Right lobe of liver (tissue), 6 donors: ENCODE measurements at regions of chr6 and their contacts with region 1.

Region 1: DNA sequence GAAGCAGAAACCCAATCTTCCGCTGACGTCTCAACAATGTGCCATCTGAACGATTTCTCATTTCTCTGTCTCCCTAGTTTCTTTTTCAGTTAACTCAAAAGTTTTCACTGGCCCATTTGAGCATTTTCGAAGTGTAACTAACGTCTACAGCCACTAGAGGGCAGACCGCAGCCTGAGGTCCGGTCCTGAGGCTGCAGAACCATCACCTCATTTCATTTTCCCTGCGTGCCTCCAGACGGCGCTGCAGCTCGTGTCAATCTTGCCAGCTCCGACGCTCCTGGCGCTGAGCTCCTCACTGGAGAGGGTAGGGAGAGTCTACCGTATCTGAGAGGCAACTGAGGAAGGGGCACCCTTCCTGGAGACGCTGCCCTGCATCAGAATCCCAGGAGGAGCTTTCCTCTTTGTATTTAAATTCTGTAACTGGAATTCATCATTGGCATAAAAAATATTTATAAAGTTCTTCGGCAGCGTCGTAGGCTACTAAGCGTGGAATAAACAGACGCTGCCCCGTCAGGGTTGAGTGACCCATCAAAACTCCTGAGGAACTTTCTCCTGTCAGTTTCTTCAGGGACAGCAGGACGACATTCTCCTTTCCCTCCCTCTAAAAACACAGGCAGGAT is 28.5 kb upstream of the DTNBP1 start:
- DNase-seq: peak; percentile 83 to 86 (median 83)
- ATAC-seq: peak; percentile 98 to 100 (median 99)
- H3K4me3 ChIP-seq: peak overlapping the region in 1 of 3 donors; percentile 12
- H3K27ac ChIP-seq: peak overlapping the region in 1 of 3 donors; percentile 53
- H3K4me1 ChIP-seq: peaks cover 0 to 15% (median 8%) of the 10 kb centered on the region in 4 donors
- H3K27me3 ChIP-seq: no peaks in the 10 kb centered on the region
- CTCF ChIP-seq: peak; percentile 99 to 100 (median 100)
- POLR2A ChIP-seq: no peak

Region 2: DNA sequence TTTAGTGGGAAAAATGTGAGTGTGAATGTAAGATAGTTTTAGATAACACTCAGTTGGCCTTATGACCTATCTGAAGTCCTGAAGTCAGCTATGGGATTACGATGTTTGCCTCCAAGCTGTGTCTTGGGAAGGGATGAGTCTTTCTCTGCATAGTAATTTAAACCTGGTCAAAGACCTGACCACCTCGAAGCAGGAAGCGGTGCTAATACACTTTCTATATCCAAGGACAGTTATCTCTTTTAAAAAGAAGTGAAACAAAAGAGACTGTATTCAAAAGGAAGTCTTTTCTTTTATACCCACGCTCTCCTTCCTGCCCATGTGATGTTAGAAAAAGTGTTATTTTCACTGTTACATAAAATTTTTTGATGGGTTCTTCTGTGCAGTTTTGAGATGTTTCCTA is 350.6 kb before region 1 on chr6:
- intact Hi-C with region 1: no loop called
- DNase-seq: no peak
- ATAC-seq: peak in 1 of 4 donors; percentile 46
- H3K4me3 ChIP-seq: no peak overlapping the region
- H3K27ac ChIP-seq: no peak overlapping the region
- H3K4me1 ChIP-seq: peaks cover 0 to 12% (median 0%) of the 10 kb centered on the region in 4 donors
- H3K27me3 ChIP-seq: no peaks in the 10 kb centered on the region
- CTCF ChIP-seq: no peak
- POLR2A ChIP-seq: no peak

Region 3: GRCh38 chr6:16058216-16059075 is 367.1 kb after region 1 on chr6:
- intact Hi-C with region 1: no loop called
- DNase-seq: no peak
- ATAC-seq: no peak
- H3K4me3 ChIP-seq: no peak overlapping the region
- H3K27ac ChIP-seq: no peak overlapping the region
- H3K4me1 ChIP-seq: no peaks in the 10 kb centered on the region
- H3K27me3 ChIP-seq: no peaks in the 10 kb centered on the region
- CTCF ChIP-seq: no peak
- POLR2A ChIP-seq: no peak

Region 4: DNA sequence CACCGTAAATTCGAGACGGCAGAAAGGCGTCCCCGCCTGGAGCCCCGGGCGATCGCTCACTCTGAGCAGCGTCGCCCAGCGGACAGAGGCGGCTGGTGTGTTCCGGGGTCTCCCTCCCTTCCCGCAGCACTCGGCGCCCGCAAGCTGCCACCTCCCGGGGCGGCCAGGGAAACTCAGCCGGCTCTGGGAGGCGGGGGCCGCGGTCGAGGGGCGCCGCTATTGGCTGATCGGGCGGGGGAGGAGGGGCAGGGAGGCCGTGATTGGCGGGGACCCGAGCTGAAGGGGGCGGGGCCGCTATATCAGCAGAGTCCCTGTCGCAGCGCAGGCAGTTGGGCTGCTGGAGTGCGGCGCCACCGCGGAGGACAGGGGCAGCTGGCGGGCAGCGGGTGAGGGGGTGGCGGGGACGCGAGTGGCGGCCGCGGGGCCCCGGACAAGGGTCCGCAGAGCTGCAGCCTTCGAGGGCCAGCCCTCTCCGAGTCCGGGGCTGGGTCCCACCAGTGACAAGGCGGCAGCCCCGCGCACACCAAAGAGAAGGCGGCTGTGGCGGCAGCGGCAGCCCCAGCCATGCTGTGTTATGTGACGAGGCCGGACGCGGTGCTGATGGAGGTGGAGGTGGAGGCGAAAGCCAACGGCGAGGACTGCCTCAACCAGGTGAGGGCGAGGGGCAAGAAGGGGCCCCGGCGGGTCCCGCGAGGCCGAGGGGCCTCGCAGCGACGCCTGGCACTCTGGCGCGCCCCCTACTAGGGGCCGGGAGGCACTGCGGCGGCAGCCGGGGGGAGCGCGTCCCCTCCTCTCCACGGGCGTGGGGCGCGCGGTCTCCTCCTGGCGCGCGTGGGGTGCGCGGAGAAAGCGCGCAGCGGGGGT is 437.6 kb after region 1 on chr6 and contains the start of gene MYLIP:
- intact Hi-C with region 1: loop called in 1 of 2 experiments (anchors 10 kb)
- DNase-seq: peak; percentile 98 to 99 (median 99)
- ATAC-seq: peak; percentile 93 to 97 (median 96)
- H3K4me3 ChIP-seq: peak within 1 kb of the TSS; percentile 84 to 99 (median 97)
- H3K27ac ChIP-seq: peak within 1 kb of the TSS; percentile 84 to 98 (median 91)
- H3K4me1 ChIP-seq: peaks cover 0 to 14% (median 0%) of the 10 kb centered on the region in 4 donors
- H3K27me3 ChIP-seq: no peaks in the 10 kb centered on the region
- CTCF ChIP-seq: peak; percentile 52 to 64 (median 59)
- POLR2A ChIP-seq: peak; percentile 100
- total RNA-seq, gene MYLIP: 2.0 to 5.3 (median 2.8) TPM

Region 5: GRCh38 chr6:16183187-16183664 is 491.9 kb after region 1 on chr6:
- intact Hi-C with region 1: loop called in 1 of 2 experiments (anchors 10 kb)
- DNase-seq: no peak
- ATAC-seq: peak; percentile 60 to 78 (median 69)
- H3K4me3 ChIP-seq: no peak overlapping the region
- H3K27ac ChIP-seq: no peak overlapping the region
- H3K4me1 ChIP-seq: no peaks in the 10 kb centered on the region
- H3K27me3 ChIP-seq: no peaks in the 10 kb centered on the region
- CTCF ChIP-seq: peak; percentile 66 to 70 (median 68)
- POLR2A ChIP-seq: no peak

Region 6: DNA sequence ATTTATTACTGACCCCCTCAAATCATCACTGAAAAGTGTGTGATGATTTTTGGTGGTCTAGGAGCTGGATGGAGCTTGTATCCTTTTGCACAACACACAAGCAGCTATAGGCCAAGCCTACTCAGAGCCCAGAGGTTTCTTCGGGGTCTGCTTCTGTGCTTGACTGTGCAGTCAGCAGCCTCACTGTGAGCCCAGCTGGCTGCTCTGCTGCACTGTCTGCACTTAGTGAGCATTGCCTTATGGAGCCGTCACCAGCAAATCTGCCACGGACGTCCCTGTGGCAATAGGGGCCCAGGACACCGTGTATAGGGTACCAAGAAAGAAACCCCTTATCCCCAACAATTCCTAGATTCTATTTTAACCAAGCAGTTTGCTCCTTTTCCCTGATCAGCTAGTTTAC is 508.4 kb after region 1 on chr6:
- intact Hi-C with region 1: loop called in 1 of 2 experiments (anchors 10 kb)
- DNase-seq: no peak
- ATAC-seq: no peak
- H3K4me3 ChIP-seq: no peak overlapping the region
- H3K27ac ChIP-seq: no peak overlapping the region
- H3K4me1 ChIP-seq: no peaks in the 10 kb centered on the region
- H3K27me3 ChIP-seq: no peaks in the 10 kb centered on the region
- CTCF ChIP-seq: no peak
- POLR2A ChIP-seq: no peak